CD4-positive, alpha-beta T cell (primary cell): ENCODE measurements at regions of chr21 and their contacts with region 1.

Region 1: GRCh38 chr21:41369105-41369919 is 7.5 kb downstream of the MX2 start:
- DNase-seq: peak in 12 of 14 experiments; percentile 23 to 69 (median 35)
- ATAC-seq: peak; percentile 82
- H3K4me3 ChIP-seq: peak overlapping the region; percentile 61
- H3K4me3 Mint-ChIP-seq: peak overlapping the region; percentile 88
- H3K27ac ChIP-seq: peak overlapping the region; percentile 81
- H3K27ac Mint-ChIP-seq: peak overlapping the region; percentile 98
- H3K4me1 ChIP-seq: peaks cover 72% of the 10 kb centered on the region
- H3K4me1 Mint-ChIP-seq: peaks cover 87% of the 10 kb centered on the region
- H3K27me3 ChIP-seq: no peaks in the 10 kb centered on the region
- H3K27me3 Mint-ChIP-seq: no peaks in the 10 kb centered on the region
- CTCF ChIP-seq: no peak

Region 2: DNA sequence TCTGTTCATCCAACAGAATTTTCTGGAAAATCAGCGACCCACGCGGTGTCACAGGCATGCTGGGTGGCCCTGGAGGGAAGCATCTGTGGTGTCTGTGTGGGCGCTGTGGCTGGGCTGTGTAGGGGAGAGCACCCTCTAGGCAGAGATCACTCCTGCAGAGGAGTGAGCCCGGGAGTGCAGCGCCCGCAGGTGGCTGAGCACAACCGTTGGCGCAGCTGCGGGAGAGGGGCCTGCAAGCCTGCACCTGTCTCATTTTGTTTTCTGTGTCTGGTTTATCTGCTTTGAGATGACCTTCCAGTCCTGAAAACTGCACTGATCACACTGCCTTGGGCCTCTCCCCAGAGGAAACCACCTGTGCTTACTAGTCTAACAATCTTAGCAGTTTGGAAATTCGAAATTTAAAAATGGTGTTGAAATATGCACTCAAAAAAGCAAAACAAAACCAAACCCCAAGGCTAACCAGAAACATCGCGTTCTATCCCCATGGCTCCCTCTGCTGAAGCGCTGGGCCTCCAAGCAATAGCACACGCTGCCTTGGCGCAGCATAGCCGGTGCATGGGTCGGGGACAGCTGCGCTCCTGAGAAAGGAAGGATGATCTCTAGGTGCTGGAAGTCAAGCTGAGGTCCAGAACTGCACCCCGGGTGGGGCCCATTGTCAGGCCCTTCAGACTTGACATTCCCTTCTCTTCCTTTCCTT is 48.0 kb before region 1 on chr21:
- CTCF ChIA-PET with region 1: no interaction called
- POLR2A ChIA-PET with region 1: interaction called, 3 read pairs
- intact Hi-C with region 1: loop called in 1 of 2 experiments (anchors 10 kb)
- DNase-seq: peak in 8 of 14 experiments; percentile 1 to 38 (median 22)
- ATAC-seq: peak; percentile 85
- H3K4me3 ChIP-seq: no peak overlapping the region
- H3K4me3 Mint-ChIP-seq: no peak overlapping the region
- H3K27ac ChIP-seq: no peak overlapping the region
- H3K27ac Mint-ChIP-seq: no peak overlapping the region
- H3K4me1 ChIP-seq: peaks cover 12% of the 10 kb centered on the region
- H3K4me1 Mint-ChIP-seq: peaks cover 13% of the 10 kb centered on the region
- H3K27me3 ChIP-seq: peaks cover 14 to 31% of the 10 kb centered on the region in 2 experiments
- H3K27me3 Mint-ChIP-seq: peaks cover 32% of the 10 kb centered on the region
- CTCF ChIP-seq: no peak

Region 3: DNA sequence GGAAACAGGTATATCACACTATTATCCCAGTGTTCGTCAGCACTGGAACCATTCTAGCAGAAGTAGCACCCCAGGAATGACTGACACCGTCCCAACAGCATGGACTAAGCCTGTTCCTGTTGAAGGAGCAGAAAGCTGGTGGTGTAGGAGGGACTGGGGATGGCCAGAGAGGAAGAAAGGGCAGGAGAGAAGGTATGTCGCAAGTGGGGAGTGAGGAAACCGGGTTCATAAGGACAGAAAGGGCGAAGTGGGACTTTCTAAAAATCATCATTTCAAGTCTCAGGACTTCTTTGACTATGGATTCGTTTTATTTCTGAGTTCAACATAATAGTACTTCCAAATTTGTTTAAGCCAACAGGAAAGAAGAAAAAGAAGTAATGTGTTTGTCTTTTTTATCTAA is 37.0 kb after region 1 on chr21:
- CTCF ChIA-PET with region 1: no interaction called
- POLR2A ChIA-PET with region 1: no interaction called
- intact Hi-C with region 1: loop called in 1 of 2 experiments (anchors 5 kb)
- DNase-seq: peak in 1 of 14 experiments; percentile 34
- ATAC-seq: no peak
- H3K4me3 ChIP-seq: no peak overlapping the region
- H3K4me3 Mint-ChIP-seq: no peak overlapping the region
- H3K27ac ChIP-seq: no peak overlapping the region
- H3K27ac Mint-ChIP-seq: no peak overlapping the region
- H3K4me1 ChIP-seq: no peaks in the 10 kb centered on the region
- H3K4me1 Mint-ChIP-seq: no peaks in the 10 kb centered on the region
- H3K27me3 ChIP-seq: no peaks in the 10 kb centered on the region
- H3K27me3 Mint-ChIP-seq: no peaks in the 10 kb centered on the region
- CTCF ChIP-seq: no peak

Region 4: GRCh38 chr21:41419911-41420862 is 50.9 kb after region 1 on chr21:
- CTCF ChIA-PET with region 1: no interaction called
- POLR2A ChIA-PET with region 1: interaction called, 87 read pairs
- intact Hi-C with region 1: no loop called
- DNase-seq: peak in 13 of 14 experiments; percentile 23 to 83 (median 48)
- ATAC-seq: peak; percentile 75
- H3K4me3 ChIP-seq: peak overlapping the region; percentile 65
- H3K4me3 Mint-ChIP-seq: peak overlapping the region; percentile 97
- H3K27ac ChIP-seq: peak overlapping the region in 1 of 2 donors; percentile 46
- H3K27ac Mint-ChIP-seq: peak overlapping the region; percentile 88
- H3K4me1 ChIP-seq: peaks cover 21% of the 10 kb centered on the region
- H3K4me1 Mint-ChIP-seq: peaks cover 45% of the 10 kb centered on the region
- H3K27me3 ChIP-seq: no peaks in the 10 kb centered on the region
- H3K27me3 Mint-ChIP-seq: no peaks in the 10 kb centered on the region
- CTCF ChIP-seq: no peak

Region 5: DNA sequence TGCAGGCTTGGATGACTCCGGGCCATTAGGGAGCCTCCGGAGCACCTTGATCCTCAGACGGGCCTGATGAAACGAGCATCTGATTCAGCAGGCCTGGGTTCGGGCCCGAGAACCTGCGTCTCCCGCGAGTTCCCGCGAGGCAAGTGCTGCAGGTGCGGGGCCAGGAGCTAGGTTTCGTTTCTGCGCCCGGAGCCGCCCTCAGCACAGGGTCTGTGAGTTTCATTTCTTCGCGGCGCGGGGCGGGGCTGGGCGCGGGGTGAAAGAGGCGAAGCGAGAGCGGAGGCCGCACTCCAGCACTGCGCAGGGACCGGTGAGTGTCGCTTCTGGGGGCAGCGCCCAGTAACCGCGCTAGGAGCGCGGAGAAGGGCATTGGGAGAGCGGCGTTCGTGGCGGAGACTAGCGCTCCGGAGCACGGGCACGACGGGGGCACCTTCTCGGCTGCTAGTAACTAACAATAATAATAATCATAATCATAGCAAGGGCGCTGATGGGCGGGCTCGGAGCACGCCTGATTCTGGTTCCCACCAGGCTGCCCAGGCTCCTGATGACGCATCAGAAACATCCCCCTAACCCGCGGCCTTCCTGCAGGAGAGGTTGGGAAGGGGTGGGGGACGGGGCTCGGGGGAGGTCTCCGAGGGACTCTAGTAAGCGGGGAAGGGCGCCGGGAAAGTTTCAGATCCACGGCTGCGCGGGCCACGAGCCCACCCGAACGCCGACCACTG is 56.8 kb after region 1 on chr21 and contains the start of gene MX1:
- CTCF ChIA-PET with region 1: no interaction called
- POLR2A ChIA-PET with region 1: interaction called, 87 read pairs
- intact Hi-C with region 1: no loop called
- DNase-seq: peak; percentile 84 to 99 (median 89)
- ATAC-seq: peak; percentile 98
- H3K4me3 ChIP-seq: peak within 1 kb of the TSS; percentile 96
- H3K4me3 Mint-ChIP-seq: peak within 1 kb of the TSS; percentile 99
- H3K27ac ChIP-seq: peak within 1 kb of the TSS; percentile 30 to 62
- H3K27ac Mint-ChIP-seq: peak within 1 kb of the TSS; percentile 95
- H3K4me1 ChIP-seq: peaks cover 28% of the 10 kb centered on the region
- H3K4me1 Mint-ChIP-seq: peaks cover 70% of the 10 kb centered on the region
- H3K27me3 ChIP-seq: no peaks in the 10 kb centered on the region
- H3K27me3 Mint-ChIP-seq: no peaks in the 10 kb centered on the region
- CTCF ChIP-seq: no peak
- total RNA-seq, gene MX1: 82.3 to 86.3 TPM